Left ventricle myocardium inferior (tissue), 1 donor: ENCODE measurements at regions of chr3 and their contacts with region 1.

Region 1: DNA sequence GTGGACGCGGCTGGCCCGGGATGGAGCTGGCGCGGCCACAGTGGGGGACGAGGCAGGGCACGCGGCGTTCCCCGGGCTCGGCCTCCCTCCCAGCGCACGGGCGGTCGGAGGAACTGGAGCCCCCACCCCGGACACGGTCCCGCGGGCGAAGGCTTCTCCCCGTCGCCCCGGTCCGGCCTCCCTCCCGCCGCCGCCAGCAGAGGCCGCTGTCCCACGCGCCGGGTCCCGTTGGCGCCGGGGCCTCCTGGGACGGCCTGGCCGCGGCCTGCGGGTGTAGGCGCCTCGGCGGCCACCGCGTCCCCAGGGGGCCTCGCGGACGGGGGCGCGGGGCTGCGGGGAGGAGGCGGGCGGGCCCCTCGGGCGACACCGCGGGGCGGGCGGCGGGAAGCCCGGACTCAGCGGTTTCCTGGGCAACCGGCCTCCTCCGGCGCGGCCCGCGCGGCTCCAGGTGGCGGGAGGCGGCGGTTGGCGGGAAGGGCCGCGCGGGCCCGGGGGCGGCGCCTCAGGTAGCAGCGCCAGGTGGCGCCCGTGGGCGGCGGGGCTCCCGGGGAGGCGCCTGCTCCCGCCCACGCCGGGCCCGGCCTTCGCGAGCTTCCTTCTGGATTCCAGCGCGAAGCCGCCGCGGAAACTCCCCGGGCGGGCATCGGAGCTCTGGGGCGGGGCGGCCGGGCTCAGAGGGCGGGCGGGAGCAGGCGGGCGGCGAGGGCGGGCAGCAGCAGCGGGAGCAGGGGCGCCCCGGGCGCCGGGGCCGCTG is 26.7 kb downstream of the MELTF start:
- DNase-seq: peak; percentile 75
- H3K4me3 ChIP-seq: peak overlapping the region; percentile 76
- H3K27ac ChIP-seq: peak overlapping the region; percentile 65
- H3K4me1 ChIP-seq: peaks cover 15% of the 10 kb centered on the region
- H3K27me3 ChIP-seq: no peaks in the 10 kb centered on the region
- CTCF ChIP-seq: peak; percentile 85

Region 2: DNA sequence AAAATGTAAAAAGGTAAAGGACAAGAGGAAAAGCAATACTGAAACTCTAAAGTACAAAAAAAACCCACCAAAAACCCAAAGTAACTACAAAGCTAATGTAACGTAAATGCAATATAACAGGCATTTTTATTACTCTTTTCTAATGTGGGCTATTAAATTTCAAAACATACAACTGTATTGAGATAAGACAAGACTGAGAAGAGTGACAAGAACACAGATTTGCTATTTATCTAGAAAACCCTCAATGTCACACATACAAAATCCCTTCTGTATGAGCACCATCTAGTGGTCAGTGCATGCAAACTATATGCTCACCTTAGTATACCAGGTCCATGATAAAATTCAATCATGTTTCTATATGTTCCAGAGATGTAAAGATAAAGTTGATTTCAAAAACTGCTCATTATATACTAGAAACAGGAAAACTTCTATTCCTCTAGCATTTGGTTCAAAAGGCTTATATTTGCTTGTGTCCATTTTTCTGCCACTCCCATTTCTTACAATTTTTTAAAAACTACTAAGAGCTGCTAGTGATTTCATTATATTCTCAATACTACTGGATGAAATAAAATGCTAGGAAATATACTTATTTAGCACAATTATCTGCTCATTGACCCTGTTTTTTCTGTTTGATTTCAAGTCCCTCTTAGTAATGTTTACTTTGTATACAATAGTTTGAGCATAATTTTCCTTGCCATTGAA is 184.2 kb after region 1 on chr3:
- intact Hi-C with region 1: loop called (anchors 10 kb)
- DNase-seq: no peak
- H3K4me3 ChIP-seq: no peak overlapping the region
- H3K27ac ChIP-seq: no peak overlapping the region
- H3K4me1 ChIP-seq: peaks cover 15% of the 10 kb centered on the region
- H3K27me3 ChIP-seq: no peaks in the 10 kb centered on the region
- CTCF ChIP-seq: peak; percentile 85